ENCODE measurements at regions of chr18 and their contacts with region 1.

Region 1: GRCh38 chr18:63969960-63970802 is at the start of gene SERPINB8:
- DNase-seq: peak; percentile 95 to 98
- H3K4me3 ChIP-seq: peak within 1 kb of the TSS; percentile 75 to 89
- H3K27ac ChIP-seq: peak within 1 kb of the TSS; percentile 98 to 99
- H3K4me1 ChIP-seq: peaks cover 0 to 18% (median 9%) of the 10 kb centered on the region in 4 donors
- H3K27me3 ChIP-seq: no peaks in the 10 kb centered on the region
- CTCF ChIP-seq: no peak

Region 2: DNA sequence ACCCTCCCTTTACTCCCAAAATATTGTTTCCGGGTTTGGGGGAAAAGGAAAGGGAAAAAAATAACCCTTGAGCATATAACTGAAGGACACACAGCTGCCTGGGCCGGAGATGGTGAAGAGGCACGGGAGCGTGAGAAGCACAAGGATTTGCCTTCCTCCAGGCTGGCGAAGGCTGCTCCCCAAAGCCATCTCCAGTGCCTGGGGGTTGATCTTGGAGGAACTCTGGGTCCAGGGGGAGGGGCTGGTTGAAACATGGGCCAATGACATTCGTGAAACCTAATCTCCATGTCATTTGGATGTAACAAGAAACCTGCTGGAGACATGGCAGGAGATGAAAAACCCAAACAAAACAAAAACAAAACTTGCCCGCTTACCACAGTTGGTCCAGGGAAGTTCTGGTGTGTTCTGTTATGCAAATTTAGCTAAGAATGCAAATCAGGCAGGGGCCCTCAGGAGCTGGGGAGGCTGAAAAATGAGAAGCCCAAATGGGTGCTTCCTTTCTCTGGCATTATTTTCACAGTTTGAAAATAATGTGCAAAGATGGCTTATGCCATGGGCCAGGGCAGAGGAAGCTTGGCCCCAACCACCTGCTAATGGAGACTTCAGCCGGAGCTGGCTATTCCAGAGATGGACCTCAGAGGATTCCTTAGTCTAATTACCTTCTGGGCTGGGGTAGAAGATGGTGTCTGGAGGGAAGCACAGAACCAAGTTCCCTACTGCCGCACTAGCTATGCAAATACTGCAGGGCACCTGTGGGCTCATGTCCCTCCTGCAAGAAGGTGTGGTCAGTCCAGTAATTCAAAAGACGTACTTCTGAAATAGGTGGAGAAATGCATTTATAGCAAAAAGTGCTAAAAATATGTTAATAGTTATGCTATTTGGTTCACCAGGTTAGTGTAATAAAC is 831.5 kb before region 1 on chr18:
- intact Hi-C with region 1: loop called (anchors 5 kb)
- DNase-seq: no peak
- H3K4me3 ChIP-seq: no peak overlapping the region
- H3K27ac ChIP-seq: no peak overlapping the region
- H3K4me1 ChIP-seq: peaks cover 0 to 25% (median 0%) of the 10 kb centered on the region in 4 donors
- H3K27me3 ChIP-seq: no peaks in the 10 kb centered on the region
- CTCF ChIP-seq: no peak

Region 3: DNA sequence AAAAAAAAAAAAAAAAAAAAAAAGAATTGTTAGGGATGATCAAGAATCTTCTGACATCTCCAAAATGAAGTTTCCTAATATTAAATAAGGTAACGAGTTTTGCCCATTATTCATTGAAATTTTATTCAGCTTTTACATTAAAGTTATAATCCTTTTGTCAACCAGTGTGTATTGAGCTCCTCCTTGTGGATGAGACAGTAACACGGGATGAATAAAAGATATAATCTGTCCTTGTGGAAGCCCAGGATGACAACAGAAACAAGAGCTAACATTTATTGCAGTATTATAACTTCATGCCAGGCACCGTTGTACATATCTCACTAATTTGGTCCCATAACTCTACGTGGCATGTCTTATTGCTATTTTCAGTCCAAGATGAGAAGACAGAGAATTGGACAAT is 228.4 kb before region 1 on chr18:
- intact Hi-C with region 1: no loop called
- DNase-seq: no peak
- H3K4me3 ChIP-seq: no peak overlapping the region
- H3K27ac ChIP-seq: no peak overlapping the region
- H3K4me1 ChIP-seq: no peaks in the 10 kb centered on the region
- H3K27me3 ChIP-seq: no peaks in the 10 kb centered on the region
- CTCF ChIP-seq: no peak

Measured in tibial artery (tissue), 4 donors.